ENCODE measurements at regions of chr11 and their contacts with region 1.

Region 1: GRCh38 chr11:121655537-121656327 is 203.0 kb upstream of the SORL1-AS1 start:
- DNase-seq: peak; percentile 83 to 92
- H3K4me3 ChIP-seq: peak overlapping the region; percentile 37
- H3K4me3 Mint-ChIP-seq: peak overlapping the region; percentile 72
- H3K27ac Mint-ChIP-seq: peak overlapping the region; percentile 8
- H3K4me1 ChIP-seq: peaks cover 12% of the 10 kb centered on the region; the same call in 1 of the 2 replicates
- H3K4me1 Mint-ChIP-seq: no peaks in the 10 kb centered on the region
- H3K27me3 ChIP-seq: no peaks in the 10 kb centered on the region
- H3K27me3 Mint-ChIP-seq: peaks cover 25% of the 10 kb centered on the region
- CTCF ChIP-seq: peak; percentile 87 to 99

Region 2: DNA sequence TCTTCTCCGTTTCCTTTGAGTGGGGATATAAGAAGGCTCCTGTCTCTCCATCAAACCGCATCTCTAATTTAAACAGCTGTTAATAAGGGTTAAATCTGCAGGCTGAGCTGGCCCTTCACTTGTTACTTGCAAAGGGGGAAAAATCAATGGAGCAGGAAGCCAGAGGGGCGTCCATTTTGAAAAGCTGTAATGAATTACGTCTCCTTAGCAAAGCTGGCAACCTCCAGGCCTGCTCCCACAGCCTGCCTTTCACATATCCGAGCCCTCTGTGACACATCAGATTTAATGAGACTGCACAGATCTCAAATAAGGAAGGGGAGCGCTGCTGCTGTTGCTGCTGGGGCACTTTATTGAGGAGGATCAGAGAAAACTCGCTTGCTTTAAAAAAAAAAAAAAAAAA is 139.4 kb after region 1 on chr11:
- CTCF ChIA-PET with region 1: no interaction called
- POLR2A ChIA-PET with region 1: no interaction called
- intact Hi-C with region 1: no loop called
- DNase-seq: no peak
- H3K4me3 ChIP-seq: no peak overlapping the region
- H3K4me3 Mint-ChIP-seq: no peak overlapping the region
- H3K27ac Mint-ChIP-seq: no peak overlapping the region
- H3K4me1 ChIP-seq: no peaks in the 10 kb centered on the region
- H3K4me1 Mint-ChIP-seq: no peaks in the 10 kb centered on the region
- H3K27me3 ChIP-seq: no peaks in the 10 kb centered on the region
- H3K27me3 Mint-ChIP-seq: peaks cover 11% of the 10 kb centered on the region
- CTCF ChIP-seq: no peak

Region 3: DNA sequence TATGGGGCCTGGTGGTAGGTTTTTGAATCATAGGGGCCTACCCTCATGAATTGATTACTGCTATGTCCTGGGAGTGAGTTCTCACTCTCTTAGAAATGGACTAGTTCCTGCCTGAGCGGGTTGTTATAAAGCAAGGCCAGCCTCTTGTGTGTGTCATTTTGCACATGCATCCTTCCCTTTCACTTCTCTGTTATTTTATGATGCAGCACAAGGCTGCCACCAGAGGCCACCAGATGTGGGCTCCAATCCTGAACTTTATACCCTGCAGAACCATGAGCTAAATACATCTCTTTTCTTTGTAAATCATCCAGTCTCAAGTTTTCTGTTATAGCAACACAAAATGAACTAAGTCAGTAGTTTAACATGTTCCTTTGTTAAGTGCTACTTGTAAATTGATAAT is 208.9 kb after region 1 on chr11:
- CTCF ChIA-PET with region 1: no interaction called
- POLR2A ChIA-PET with region 1: no interaction called
- intact Hi-C with region 1: loop called (anchors 5 kb)
- DNase-seq: no peak
- H3K4me3 ChIP-seq: no peak overlapping the region
- H3K4me3 Mint-ChIP-seq: no peak overlapping the region
- H3K27ac Mint-ChIP-seq: no peak overlapping the region
- H3K4me1 ChIP-seq: no peaks in the 10 kb centered on the region
- H3K4me1 Mint-ChIP-seq: no peaks in the 10 kb centered on the region
- H3K27me3 ChIP-seq: no peaks in the 10 kb centered on the region
- H3K27me3 Mint-ChIP-seq: peaks cover 3% of the 10 kb centered on the region
- CTCF ChIP-seq: no peak

Region 4: GRCh38 chr11:122020902-122021301 is 365.2 kb after region 1 on chr11:
- CTCF ChIA-PET with region 1: no interaction called
- POLR2A ChIA-PET with region 1: no interaction called
- intact Hi-C with region 1: loop called (anchors 5 kb)
- DNase-seq: peak in 1 of 2 experiments; percentile 22
- H3K4me3 ChIP-seq: no peak overlapping the region
- H3K4me3 Mint-ChIP-seq: no peak overlapping the region
- H3K27ac Mint-ChIP-seq: no peak overlapping the region
- H3K4me1 ChIP-seq: no peaks in the 10 kb centered on the region
- H3K4me1 Mint-ChIP-seq: no peaks in the 10 kb centered on the region
- H3K27me3 ChIP-seq: no peaks in the 10 kb centered on the region; the same call in 1 of the 2 replicates
- H3K27me3 Mint-ChIP-seq: peaks cover 3% of the 10 kb centered on the region
- CTCF ChIP-seq: peak; percentile 58 to 60

Region 5: GRCh38 chr11:122115524-122116379 is 460.0 kb after region 1 on chr11 and contains the start of gene BLID:
- CTCF ChIA-PET with region 1: no interaction called
- POLR2A ChIA-PET with region 1: no interaction called
- intact Hi-C with region 1: loop called (anchors 1 kb)
- DNase-seq: peak; percentile 62 to 65
- H3K4me3 ChIP-seq: no peak within 1 kb of the TSS
- H3K4me3 Mint-ChIP-seq: no peak within 1 kb of the TSS
- H3K27ac Mint-ChIP-seq: no peak within 1 kb of the TSS
- H3K4me1 ChIP-seq: no peaks in the 10 kb centered on the region
- H3K4me1 Mint-ChIP-seq: no peaks in the 10 kb centered on the region
- H3K27me3 ChIP-seq: no peaks in the 10 kb centered on the region
- H3K27me3 Mint-ChIP-seq: peaks cover 24% of the 10 kb centered on the region
- CTCF ChIP-seq: peak; percentile 67 to 89
- total RNA-seq, gene BLID: not detected in 2 replicates

Region 6: DNA sequence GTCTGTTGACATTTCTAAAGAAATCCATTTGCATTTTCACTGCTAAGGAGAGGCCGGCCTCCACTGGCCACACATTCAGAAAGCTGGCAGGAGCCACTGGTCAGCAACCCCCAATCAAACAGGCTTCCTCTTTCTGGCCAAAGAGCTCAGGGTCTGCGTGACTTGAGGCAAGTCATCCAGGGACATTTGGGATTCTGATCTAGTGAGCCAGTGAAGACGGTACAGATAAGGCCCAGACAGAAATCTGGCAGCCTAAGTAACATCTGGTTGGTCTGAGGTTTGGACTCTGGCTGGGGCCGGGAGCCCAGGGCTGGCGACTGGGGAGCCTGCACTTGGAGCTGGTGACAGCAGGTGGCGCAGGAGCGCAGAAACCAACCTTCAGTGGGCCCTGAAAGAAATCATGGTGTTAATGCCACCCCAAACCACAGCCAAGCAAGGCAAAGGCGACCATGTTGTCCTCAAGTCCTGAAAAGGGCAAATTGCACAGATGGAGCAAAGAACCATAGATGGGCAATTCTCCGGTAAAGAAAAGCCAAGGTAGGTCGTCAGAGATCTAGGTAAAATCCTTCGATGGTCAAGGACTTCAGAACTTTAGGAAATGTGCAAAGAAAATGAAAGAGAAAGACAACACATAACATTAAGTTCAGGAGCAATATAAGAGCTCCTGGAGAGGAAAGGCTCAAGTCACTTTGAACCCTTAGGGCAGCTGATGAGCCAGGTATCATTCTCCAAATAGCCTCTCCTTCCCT is 559.7 kb after region 1 on chr11:
- CTCF ChIA-PET with region 1: no interaction called
- POLR2A ChIA-PET with region 1: no interaction called
- intact Hi-C with region 1: loop called (anchors 1 kb)
- DNase-seq: peak; percentile 68 to 82
- H3K4me3 ChIP-seq: no peak overlapping the region
- H3K4me3 Mint-ChIP-seq: no peak overlapping the region
- H3K27ac Mint-ChIP-seq: no peak overlapping the region
- H3K4me1 ChIP-seq: no peaks in the 10 kb centered on the region
- H3K4me1 Mint-ChIP-seq: no peaks in the 10 kb centered on the region
- H3K27me3 ChIP-seq: no peaks in the 10 kb centered on the region
- H3K27me3 Mint-ChIP-seq: peaks cover 12% of the 10 kb centered on the region
- CTCF ChIP-seq: peak; percentile 98 to 99

Measured in Caco-2 (cell line).